ENCODE measurements at regions of chr1 and their contacts with region 1.

Region 1: DNA sequence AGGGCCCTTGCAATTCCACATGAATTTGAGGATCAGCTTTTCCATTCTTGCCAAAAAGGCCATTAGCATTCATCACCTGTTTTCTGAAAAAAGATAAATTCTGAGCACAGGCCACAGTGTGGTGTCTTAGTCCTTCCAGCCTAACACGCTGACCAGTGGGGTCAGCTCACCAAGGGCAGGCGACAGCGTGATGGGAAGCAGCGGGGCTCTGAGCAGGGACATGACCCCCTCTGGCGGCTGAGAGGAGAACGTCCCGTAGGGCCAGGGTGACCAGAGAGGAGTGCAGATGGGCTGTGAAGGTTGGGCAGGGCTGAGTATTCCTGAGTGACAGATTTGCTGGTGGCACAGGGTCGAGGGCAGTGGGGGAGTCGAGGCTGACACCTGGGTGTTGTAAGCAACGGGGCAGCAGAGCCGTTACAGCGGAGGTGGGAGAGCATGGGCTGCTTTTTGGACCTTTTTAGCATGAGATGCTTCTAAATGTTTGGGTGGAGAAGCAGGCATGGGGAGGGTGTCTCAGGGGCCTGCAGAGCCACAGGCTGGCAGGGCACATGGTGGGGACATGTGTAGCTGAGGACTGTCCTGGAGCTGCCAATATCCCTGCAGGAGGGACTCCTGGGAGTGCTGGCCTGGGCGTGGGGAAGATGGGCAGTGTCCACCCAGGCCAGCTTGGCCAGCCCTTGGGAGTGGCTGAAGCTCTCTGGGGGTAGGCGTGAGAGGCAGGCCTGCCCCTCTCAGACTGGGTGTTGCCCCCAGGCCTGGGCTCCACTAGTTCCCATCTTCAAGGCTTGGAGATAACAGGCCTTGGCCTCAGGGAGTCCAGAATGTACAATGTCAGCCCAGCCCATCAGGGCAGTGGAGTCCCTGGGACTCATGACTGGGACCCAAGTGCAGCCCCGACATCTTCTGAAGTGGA is 8.6 kb upstream of the CALML6 start:
- DNase-seq: peak; percentile 82 to 84
- ATAC-seq: peak; percentile 57

Region 2: GRCh38 chr1:1858382-1859086 is 47.9 kb before region 1 on chr1:
- intact Hi-C with region 1: loop called in 1 of 2 experiments (anchors 5 kb)
- DNase-seq: peak; percentile 71 to 88
- ATAC-seq: peak; percentile 85